Posterior vena cava (tissue), 2 donors: ENCODE measurements at regions of chr12 and their contacts with region 1.

Region 1: GRCh38 chr12:59149997-59150642 is 229.8 kb upstream of the LRIG3 start:
- DNase-seq: no peak

Region 2: DNA sequence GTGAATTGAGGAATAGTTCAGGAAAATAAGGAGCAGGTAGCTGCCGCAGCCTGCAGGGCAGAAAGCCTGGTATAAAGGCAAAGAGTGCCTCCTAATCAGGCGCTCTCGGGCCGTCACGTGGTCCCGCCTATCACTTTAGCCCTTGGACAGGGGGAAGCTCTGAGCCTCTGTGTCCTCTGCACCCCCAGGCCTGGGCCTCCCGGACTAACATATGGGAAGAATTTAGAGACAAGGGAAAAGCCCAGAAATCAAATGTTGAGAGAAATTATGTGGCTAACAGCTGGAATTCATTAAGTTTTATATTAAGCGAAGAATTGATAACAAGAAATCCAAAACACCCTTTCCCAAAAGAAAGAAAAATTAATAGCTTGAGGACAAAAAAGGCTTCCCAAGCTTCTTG is 791.0 kb before region 1 on chr12:
- intact Hi-C with region 1: loop called in 1 of 2 experiments (anchors 10 kb)
- DNase-seq: no peak

Region 3: DNA sequence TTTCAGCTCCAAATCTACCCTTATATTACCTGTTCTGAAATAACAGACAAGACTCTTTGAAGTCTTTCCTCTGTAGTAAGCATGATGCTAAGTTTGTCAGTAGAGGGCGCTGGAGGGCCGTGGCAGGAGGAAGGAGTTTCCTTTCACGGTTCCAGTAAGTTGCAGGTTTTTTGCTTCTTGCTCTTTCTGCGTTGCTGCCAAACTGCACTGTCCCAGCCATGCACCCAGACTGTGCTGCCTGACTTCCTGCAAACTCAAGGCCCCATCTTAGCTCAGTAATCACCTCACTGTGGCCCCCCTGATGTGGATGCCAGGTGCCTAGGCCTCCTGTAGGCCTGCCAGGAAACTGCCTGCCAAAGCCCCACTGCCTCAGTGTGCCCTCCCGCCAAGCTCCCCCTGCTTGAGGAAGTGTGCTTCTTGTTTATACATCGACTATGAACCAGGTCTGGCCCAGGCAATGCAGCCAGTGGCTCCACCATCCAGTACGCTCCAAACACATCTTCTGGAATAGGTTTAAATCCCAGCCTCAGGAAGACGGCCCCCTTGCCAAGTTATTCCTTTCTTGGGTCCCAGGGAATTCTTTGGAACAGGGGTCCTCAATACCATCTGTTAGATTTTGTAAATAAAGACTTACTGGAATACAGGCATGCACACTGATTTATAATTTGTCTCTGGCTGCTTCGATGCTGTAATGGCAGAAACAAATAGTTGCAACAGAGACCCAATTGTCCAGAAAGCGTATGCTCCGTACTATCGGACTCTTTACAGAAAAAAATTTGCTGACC is 36.1 kb before region 1 on chr12:
- intact Hi-C with region 1: loop called in 1 of 2 experiments (anchors 5 kb)
- DNase-seq: peak; percentile 91

Region 4: GRCh38 chr12:59219148-59219547 is 69.0 kb after region 1 on chr12:
- intact Hi-C with region 1: no loop called
- DNase-seq: no peak